ENCODE measurements at regions of chr13 and their contacts with region 1.

Region 1: DNA sequence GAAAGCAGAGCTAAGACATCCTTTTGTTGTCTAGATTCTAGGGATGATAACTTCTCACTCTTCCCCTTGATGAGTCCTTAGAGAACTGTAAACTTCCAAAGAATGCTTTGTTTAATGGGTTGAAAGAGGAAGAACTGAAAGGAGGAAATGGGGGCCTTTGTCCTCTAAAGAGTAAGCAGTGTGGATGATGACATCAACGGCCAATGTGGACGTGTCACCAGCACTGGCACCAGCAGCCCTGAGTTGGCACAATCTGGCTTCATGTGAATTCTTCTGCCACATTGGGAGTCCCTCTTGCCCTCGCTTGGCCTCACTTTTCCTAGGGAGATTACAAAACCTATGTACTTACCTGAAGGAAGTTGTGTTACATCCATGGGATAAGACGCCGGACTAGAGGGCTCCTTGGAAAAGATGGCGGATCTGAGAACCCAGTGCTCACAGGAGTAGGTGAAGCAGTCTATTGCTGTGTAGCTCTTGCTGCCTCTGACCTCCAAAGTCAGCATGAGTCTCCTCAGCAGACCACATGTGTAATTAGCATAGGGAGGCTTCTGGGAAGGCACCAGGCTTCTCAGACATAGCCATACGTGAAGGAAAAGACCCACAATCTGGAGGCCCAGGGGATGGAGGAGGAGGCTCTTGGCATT is 62.8 kb downstream of the RGCC start:
- DNase-seq: no peak
- H3K4me3 ChIP-seq: no peak overlapping the region
- H3K27ac ChIP-seq: no peak overlapping the region
- H3K4me1 ChIP-seq: no peaks in the 10 kb centered on the region
- H3K27me3 ChIP-seq: no peaks in the 10 kb centered on the region
- CTCF ChIP-seq: no peak

Region 2: GRCh38 chr13:41488124-41488523 is 32.0 kb before region 1 on chr13:
- CTCF ChIA-PET with region 1: no interaction called
- POLR2A ChIA-PET with region 1: no interaction called
- intact Hi-C with region 1: no loop called
- DNase-seq: no peak
- H3K4me3 ChIP-seq: no peak overlapping the region
- H3K27ac ChIP-seq: no peak overlapping the region
- H3K4me1 ChIP-seq: no peaks in the 10 kb centered on the region
- H3K27me3 ChIP-seq: no peaks in the 10 kb centered on the region
- CTCF ChIP-seq: no peak

Region 3: DNA sequence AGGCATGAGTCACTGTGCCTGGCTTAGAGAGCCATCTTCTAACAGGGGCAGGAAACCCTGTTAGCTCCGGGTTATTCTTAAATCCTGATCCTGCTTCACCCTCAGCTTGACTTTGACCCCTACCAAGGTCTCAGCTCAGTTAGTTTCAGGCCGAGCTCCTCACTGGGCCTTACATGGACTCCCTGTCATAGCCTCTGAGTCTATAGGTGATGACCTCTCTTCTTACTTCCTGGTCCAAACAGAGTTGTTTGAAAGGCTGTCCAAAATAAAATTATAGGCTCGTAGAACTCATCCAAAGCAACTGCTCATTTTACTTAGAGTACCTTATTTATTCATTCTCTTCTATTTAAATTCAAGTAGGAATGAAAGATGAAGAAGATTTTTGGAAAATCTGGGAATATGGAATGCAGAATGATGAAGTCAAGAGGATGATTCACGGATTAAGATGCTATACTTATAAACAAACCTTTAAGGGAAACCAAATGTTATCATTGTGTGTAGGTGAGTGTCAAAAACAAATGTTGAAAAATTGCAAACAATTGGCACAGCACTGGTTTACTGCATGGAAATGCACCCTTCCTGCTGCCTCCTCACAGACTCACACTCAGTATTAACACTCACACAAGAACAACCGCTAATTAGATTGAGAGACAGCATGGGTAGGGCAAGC is 111.3 kb after region 1 on chr13:
- CTCF ChIA-PET with region 1: interaction called, 10 read pairs
- POLR2A ChIA-PET with region 1: no interaction called
- intact Hi-C with region 1: no loop called
- DNase-seq: no peak
- H3K4me3 ChIP-seq: no peak overlapping the region
- H3K27ac ChIP-seq: no peak overlapping the region
- H3K4me1 ChIP-seq: no peaks in the 10 kb centered on the region
- H3K27me3 ChIP-seq: no peaks in the 10 kb centered on the region
- CTCF ChIP-seq: no peak

Region 4: DNA sequence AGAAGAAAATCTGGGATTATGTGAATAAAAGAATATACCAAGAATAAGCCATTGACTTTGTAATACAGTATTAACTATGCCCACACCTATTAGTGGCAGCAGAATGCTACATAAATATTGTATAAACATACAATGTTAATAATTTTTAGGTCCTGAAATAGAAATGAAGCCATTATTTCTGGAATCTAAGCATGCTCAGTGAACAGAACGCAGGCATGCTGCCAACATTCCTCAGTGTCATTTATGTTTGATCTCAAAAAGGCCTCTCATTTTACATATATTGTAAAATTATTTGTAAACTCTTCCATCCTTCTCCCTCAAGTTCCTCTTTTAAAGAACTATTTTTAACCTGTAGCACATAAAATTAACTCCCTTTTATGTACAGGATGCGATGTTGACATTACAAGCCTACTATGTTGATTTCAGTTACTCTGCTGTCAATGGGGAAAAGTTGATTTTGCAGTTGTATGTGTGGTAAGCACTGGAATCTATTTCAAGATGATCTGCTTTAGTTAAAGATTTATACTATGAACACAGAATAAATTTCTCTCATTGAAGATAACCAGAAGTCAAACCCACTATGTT is 322.0 kb after region 1 on chr13:
- CTCF ChIA-PET with region 1: no interaction called
- POLR2A ChIA-PET with region 1: no interaction called
- intact Hi-C with region 1: no loop called
- DNase-seq: no peak
- H3K4me3 ChIP-seq: no peak overlapping the region
- H3K27ac ChIP-seq: no peak overlapping the region
- H3K4me1 ChIP-seq: no peaks in the 10 kb centered on the region
- H3K27me3 ChIP-seq: no peaks in the 10 kb centered on the region
- CTCF ChIP-seq: no peak

Region 5: GRCh38 chr13:42164557-42165125 is 644.5 kb after region 1 on chr13:
- CTCF ChIA-PET with region 1: no interaction called
- POLR2A ChIA-PET with region 1: no interaction called
- intact Hi-C with region 1: no loop called
- DNase-seq: no peak
- H3K4me3 ChIP-seq: no peak overlapping the region
- H3K27ac ChIP-seq: no peak overlapping the region
- H3K4me1 ChIP-seq: no peaks in the 10 kb centered on the region
- H3K27me3 ChIP-seq: no peaks in the 10 kb centered on the region
- CTCF ChIP-seq: no peak

Measured in PC-9 (cell line).